ENCODE measurements at regions of chr9 and their contacts with region 1.

Region 1: GRCh38 chr9:134443168-134444037 is 117.1 kb downstream of the RXRA start:
- DNase-seq: peak; percentile 88
- H3K4me3 Mint-ChIP-seq: no peak overlapping the region
- H3K27ac Mint-ChIP-seq: no peak overlapping the region
- H3K4me1 Mint-ChIP-seq: no peaks in the 10 kb centered on the region
- H3K27me3 Mint-ChIP-seq: peaks cover 12% of the 10 kb centered on the region
- CTCF ChIP-seq: peak; percentile 81

Region 2: DNA sequence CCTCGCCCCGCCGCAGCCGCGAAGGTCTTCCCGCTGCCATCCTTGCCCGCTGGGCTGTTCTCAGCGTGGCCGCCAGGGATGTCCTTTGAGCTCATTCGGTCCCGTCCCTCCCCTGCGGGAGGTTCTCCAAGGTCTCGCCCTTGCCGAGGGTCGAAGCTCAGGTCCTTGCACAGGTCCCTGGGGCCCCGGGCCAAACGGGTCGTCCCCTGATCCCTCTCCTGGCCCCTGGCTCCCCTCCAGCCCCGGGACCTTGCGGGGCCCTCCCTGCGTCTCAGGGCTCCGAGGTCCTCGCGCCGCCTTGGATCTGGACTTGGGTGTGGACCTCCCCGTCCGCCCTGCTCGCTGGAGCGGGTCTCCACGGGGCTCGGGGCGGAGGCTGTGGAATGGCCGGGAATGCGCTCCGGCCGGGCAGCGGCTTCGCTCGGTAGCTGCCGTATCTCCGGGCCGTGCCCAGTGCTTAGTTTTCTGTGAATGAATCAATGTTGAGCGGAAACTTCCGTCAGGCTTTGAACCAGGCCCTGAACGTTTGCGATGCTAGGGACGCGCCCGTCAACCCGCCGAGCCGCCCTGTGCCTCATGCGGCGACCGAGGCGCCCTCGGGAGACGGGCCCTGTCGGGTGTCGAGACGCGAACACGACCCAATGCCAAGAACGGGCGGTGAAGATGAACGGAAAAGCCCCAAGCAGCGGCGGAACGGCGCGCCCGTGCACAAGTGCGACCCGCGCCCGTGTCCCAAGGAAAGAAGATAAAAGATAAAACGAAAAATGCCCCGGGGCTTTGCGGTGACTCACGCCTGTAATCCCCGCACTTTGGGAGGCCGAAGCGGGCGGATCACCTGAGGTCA is 279.8 kb before region 1 on chr9:
- CTCF ChIA-PET with region 1: interaction called, 12 read pairs
- intact Hi-C with region 1: no loop called
- DNase-seq: peak; percentile 52
- H3K4me3 Mint-ChIP-seq: no peak overlapping the region
- H3K27ac Mint-ChIP-seq: no peak overlapping the region
- H3K4me1 Mint-ChIP-seq: peaks cover 8% of the 10 kb centered on the region
- H3K27me3 Mint-ChIP-seq: no peaks in the 10 kb centered on the region
- CTCF ChIP-seq: peak; percentile 10

Region 3: GRCh38 chr9:134171316-134172197 is 271.8 kb before region 1 on chr9:
- CTCF ChIA-PET with region 1: interaction called, 19 read pairs
- intact Hi-C with region 1: loop called (anchors 1 kb)
- DNase-seq: no peak
- H3K4me3 Mint-ChIP-seq: no peak overlapping the region
- H3K27ac Mint-ChIP-seq: no peak overlapping the region
- H3K4me1 Mint-ChIP-seq: no peaks in the 10 kb centered on the region
- H3K27me3 Mint-ChIP-seq: peaks cover 33% of the 10 kb centered on the region
- CTCF ChIP-seq: no peak